ENCODE measurements at regions of chr12 and their contacts with region 1.

Region 1: DNA sequence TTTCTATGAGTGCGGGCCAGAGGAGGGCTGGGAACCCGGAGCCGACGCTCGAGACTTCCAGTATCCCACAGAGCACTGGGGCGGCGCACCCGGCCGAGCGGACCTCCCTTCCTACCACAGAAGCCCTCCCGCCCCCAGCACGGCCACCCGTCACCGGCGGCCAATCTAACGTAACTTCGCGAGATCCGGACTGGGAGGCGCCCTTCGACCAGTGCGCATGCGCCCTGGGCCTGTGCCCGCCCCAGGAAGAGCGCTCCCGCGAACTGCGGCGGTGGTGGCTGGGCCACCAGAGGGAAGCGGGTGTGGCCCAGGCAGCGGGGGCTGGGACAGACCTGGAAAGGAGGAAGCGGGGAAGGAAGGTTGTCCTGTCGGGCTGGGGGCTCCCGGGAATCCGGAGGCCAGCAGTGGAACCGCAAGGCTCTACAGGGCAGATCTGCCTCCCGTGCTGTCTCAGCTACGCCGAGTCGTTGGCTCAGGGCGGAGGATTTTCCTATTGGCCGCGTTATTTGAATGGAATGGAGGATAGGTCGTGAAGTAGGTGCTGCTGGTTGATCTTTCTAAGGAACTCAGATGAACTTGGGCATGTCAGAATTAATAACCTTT is at the start of gene PPP1R12A:
- DNase-seq: peak; percentile 94
- H3K4me3 Mint-ChIP-seq: peak within 1 kb of the TSS; percentile 96
- H3K27ac Mint-ChIP-seq: peak within 1 kb of the TSS; percentile 88
- H3K4me1 Mint-ChIP-seq: peaks cover 44% of the 10 kb centered on the region
- H3K27me3 Mint-ChIP-seq: no peaks in the 10 kb centered on the region
- total RNA-seq, gene PPP1R12A: 85.0 and 87.1 TPM in 2 replicates

Region 2: DNA sequence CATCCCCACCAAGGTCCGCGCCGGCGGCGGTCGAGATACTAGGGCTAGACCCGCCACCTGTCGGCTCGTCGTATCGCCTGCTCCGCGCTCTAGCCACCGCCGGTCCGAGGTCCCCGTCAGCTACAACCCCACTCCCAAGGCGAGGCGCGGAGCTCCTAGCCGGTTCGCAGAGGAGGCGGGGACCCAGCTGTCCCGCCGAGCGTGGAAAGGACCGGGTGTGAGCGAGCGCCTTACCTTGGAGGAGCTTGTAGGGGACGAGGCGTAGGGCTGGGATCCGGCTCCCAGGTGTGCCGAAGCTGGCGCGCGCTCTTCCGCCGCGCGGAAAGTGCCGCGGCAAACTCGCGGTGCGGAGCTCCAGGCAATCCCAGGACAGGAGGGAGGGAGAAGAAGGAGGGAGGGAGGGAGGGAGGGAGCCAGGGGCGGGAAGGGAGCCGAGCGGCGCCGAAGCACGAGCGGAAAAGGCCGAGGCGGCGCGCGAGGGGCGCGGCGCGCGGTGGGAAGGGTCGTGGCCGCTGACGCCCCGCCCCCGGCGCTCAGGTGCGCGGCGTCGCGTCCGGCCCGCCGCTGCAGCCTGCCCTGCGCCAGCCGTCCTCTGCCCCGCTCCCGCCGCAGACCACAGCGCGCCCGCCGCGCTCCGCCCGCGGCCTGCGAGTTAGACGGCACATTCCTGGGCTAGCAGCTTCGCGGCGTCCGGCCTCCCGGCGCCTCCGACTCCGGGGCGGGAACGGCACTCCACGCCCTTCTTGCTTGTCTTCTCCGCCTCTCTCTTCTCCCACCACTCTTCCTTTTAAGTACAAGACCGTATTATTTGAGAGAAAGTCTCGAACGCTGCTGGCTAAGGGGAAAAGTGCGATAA is 244.3 kb before region 1 on chr12 and contains the start of gene PAWR:
- intact Hi-C with region 1: loop called (anchors 1 kb)
- DNase-seq: peak; percentile 1
- H3K4me3 Mint-ChIP-seq: peak within 1 kb of the TSS; percentile 85
- H3K27ac Mint-ChIP-seq: no peak within 1 kb of the TSS
- H3K4me1 Mint-ChIP-seq: peaks cover 10% of the 10 kb centered on the region
- H3K27me3 Mint-ChIP-seq: peaks cover 55% of the 10 kb centered on the region
- total RNA-seq, gene PAWR: 4.0 and 6.1 TPM in 2 replicates

Region 3: DNA sequence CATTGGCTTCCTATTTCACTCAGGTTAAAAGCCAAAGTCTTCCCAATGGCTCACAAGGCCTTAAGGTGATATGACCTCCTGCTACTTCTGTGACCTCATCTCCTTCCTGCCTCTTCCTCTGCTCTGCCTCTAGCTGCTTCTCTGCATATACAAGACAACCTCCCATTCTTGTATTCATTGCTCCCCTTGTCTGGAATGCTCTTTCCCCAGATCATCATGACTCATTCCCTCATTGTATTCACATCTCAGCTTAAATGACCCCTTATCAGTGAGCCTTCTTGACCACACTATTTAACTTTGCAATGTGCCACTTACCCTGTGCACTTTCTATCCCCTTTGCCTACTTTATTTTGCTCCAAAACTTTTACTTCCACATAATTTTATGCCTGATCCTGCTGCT is 90.4 kb before region 1 on chr12:
- intact Hi-C with region 1: no loop called
- DNase-seq: no peak
- H3K4me3 Mint-ChIP-seq: no peak overlapping the region
- H3K27ac Mint-ChIP-seq: peak overlapping the region; percentile 6
- H3K4me1 Mint-ChIP-seq: peaks cover 50% of the 10 kb centered on the region
- H3K27me3 Mint-ChIP-seq: no peaks in the 10 kb centered on the region

Region 4: GRCh38 chr12:79886917-79887519 is 48.1 kb before region 1 on chr12:
- intact Hi-C with region 1: loop called (anchors 1 kb)
- DNase-seq: no peak
- H3K4me3 Mint-ChIP-seq: no peak overlapping the region
- H3K27ac Mint-ChIP-seq: no peak overlapping the region
- H3K4me1 Mint-ChIP-seq: peaks cover 45% of the 10 kb centered on the region
- H3K27me3 Mint-ChIP-seq: no peaks in the 10 kb centered on the region

Measured in activated T-helper 1 cell treated with anti-CD3 and anti-CD28 coated beads, Interleukin-12 subunit alpha, Interleukin-12 subunit beta, Interleukin-2, Interleukin-4 antibody, amounts not matched to agents 30 ng/mL and 10 ng/mL and 1 ng/mL, durations not matched to agents 14 hours and 24 hours and 36 hours (primary cell).